ENCODE measurements at regions of chr12 and their contacts with region 1.

Region 1: GRCh38 chr12:109927622-109928021 is 27.5 kb downstream of the TCHP start:
- DNase-seq: no peak
- ATAC-seq: no peak
- H3K4me3 Mint-ChIP-seq: no peak overlapping the region
- H3K27ac Mint-ChIP-seq: peak overlapping the region; percentile 73
- H3K4me1 Mint-ChIP-seq: peaks cover 14% of the 10 kb centered on the region
- H3K27me3 Mint-ChIP-seq: no peaks in the 10 kb centered on the region
- CTCF ChIP-seq: no peak

Region 2: DNA sequence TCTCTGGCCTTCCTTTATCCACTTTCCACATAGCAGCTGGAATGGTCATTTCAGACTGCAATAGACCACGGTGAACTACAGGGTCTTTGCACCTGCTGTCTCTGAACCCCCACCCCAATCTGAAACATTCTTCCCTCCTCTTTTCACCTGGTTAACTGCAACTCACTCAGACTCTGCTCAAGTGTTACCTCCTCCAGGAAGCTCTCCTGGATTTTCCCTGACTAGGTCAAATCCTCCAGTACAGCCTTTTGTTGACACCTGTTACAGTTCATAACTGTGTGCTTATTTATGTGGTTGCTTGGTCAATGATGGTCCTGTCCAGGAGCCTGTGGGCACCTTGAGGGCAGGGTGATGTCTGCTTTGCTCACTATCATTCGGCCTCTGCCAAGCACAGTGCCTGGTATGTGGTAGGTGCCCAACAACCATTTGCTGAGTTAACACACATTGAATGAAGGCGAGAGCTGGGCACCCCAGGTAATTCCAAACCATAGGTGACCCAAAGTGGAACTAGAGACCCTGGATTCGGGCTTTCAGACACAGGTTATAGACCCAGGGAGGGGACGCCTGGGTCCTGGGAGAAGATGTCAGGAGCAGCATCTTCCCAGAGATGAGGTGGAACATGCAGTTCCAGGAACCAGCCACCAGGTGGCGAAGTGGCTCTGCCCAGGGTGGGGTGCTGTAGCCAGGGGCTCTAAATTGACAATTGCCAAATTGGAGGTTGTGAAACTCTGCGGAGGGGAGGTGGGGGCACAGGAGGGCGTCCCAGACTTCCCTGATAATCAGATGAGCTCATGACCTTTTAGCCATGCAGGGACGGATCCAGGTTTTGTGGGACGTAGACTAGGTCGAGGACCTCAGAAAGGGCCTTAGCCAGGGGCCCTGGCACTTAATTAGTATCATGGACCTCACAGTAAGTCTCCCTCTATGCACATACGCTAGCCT is 122.5 kb before region 1 on chr12:
- CTCF ChIA-PET with region 1: no interaction called
- POLR2A ChIA-PET with region 1: no interaction called
- intact Hi-C with region 1: loop called (anchors 1 kb)
- DNase-seq: peak; percentile 62
- ATAC-seq: peak; percentile 84
- H3K4me3 Mint-ChIP-seq: no peak overlapping the region
- H3K27ac Mint-ChIP-seq: no peak overlapping the region
- H3K4me1 Mint-ChIP-seq: peaks cover 2% of the 10 kb centered on the region
- H3K27me3 Mint-ChIP-seq: peaks cover 3% of the 10 kb centered on the region
- CTCF ChIP-seq: peak; percentile 88

Region 3: GRCh38 chr12:109910969-109911348 is 16.7 kb before region 1 on chr12:
- CTCF ChIA-PET with region 1: no interaction called
- POLR2A ChIA-PET with region 1: no interaction called
- intact Hi-C with region 1: no loop called
- DNase-seq: no peak
- ATAC-seq: no peak
- H3K4me3 Mint-ChIP-seq: no peak overlapping the region
- H3K27ac Mint-ChIP-seq: no peak overlapping the region
- H3K4me1 Mint-ChIP-seq: no peaks in the 10 kb centered on the region
- H3K27me3 Mint-ChIP-seq: no peaks in the 10 kb centered on the region
- CTCF ChIP-seq: no peak

Region 4: GRCh38 chr12:111010061-111010460 is 1082.4 kb after region 1 on chr12:
- CTCF ChIA-PET with region 1: no interaction called
- POLR2A ChIA-PET with region 1: no interaction called
- intact Hi-C with region 1: no loop called
- DNase-seq: no peak
- ATAC-seq: no peak
- H3K4me3 Mint-ChIP-seq: no peak overlapping the region
- H3K27ac Mint-ChIP-seq: no peak overlapping the region
- H3K4me1 Mint-ChIP-seq: no peaks in the 10 kb centered on the region
- H3K27me3 Mint-ChIP-seq: peaks cover 42% of the 10 kb centered on the region
- CTCF ChIP-seq: no peak

Measured in activated B cell treated with CpG ODN at 0.5 μM for 24 hours (primary cell).